Heart left ventricle (tissue), 16 donors: ENCODE measurements at regions of chr15 and their contacts with region 1.

Region 1: GRCh38 chr15:72272213-72273002 is at the start of gene PARP6:
- DNase-seq: peak; percentile 99 to 100 (median 99)
- ATAC-seq: peak; percentile 99 to 100 (median 100)
- H3K4me3 ChIP-seq: peak within 1 kb of the TSS; percentile 85 to 99 (median 94)
- H3K27ac ChIP-seq: peak within 1 kb of the TSS; percentile 34 to 96 (median 91)
- H3K4me1 ChIP-seq: peaks cover 3 to 32% (median 16%) of the 10 kb centered on the region in 12 donors
- H3K27me3 ChIP-seq: no peaks in the 10 kb centered on the region
- CTCF ChIP-seq: peak; percentile 48 to 91 (median 72)
- POLR2A ChIP-seq: peak in 1 of 2 donors; percentile 67
- total RNA-seq, gene PARP6: 25.6 to 50.3 (median 34.5) TPM

Region 2: DNA sequence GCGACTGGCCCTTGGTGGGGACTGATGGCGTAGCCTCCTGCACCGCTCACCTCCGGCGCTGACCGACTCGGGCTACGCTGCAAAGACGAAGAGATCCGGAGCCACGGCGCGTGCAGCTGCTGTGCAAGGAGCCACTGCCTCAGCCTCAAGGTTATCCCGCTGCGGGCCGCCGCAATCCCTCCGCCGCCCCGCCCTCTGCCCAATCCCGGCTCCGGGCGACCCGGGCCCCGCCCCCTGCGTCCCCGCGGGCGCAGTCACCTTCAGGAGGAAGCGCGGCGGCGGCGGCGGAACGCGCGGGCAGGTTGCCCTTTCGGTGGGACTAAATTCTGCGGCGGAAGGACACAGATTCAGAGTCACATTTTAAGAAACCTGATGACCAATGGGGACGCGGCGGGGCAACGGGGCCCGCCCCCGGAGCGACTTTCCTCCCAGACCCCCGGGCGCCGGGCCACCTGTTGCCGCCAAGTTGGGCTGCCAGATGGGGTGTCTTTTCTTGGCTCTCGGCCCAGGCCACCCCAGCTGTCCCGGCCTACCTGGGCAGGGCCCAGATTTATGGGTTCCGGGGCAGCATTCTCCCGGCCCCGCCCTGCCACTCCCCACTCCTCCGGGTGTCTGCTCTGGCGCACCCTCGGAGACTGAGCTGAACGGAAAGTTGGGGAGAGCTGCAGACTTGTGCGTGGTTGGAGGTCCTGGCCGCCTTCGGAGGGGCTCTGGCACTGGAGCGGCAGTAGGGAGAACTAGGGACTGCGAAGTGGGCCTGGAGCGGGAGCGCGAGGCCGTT is 41.2 kb before region 1 on chr15 and contains the start of gene PKM:
- intact Hi-C with region 1: loop called in 6 of 10 experiments (anchors 2 to 5 kb)
- DNase-seq: peak; percentile 96 to 98 (median 97)
- ATAC-seq: peak; percentile 79 to 90 (median 88)
- H3K4me3 ChIP-seq: peak within 1 kb of the TSS; percentile 73 to 99 (median 89)
- H3K27ac ChIP-seq: peak within 1 kb of the TSS; percentile 95 to 100 (median 99)
- H3K4me1 ChIP-seq: peaks cover 4 to 49% (median 42%) of the 10 kb centered on the region in 12 donors
- H3K27me3 ChIP-seq: no peaks in the 10 kb centered on the region
- CTCF ChIP-seq: peak in 1 of 12 donors; percentile 6
- POLR2A ChIP-seq: peak; percentile 57 to 95
- total RNA-seq, gene PKM: 648 to 1,279 (median 923) TPM